PC-3 (cell line): ENCODE measurements at regions of chr10 and their contacts with region 1.

Region 1: GRCh38 chr10:60466267-60467201 is 76.9 kb upstream of the ANK3 start:
- DNase-seq: peak; percentile 99
- ATAC-seq: peak; percentile 80
- H3K4me3 ChIP-seq: peak overlapping the region; percentile 58
- H3K27ac ChIP-seq: peak overlapping the region; percentile 93
- H3K4me1 ChIP-seq: peaks cover 51% of the 10 kb centered on the region
- H3K27me3 ChIP-seq: no peaks in the 10 kb centered on the region
- CTCF ChIP-seq: no peak; the same call in 1 of the 2 replicates

Region 2: GRCh38 chr10:60323162-60323561 is 143.4 kb before region 1 on chr10:
- CTCF ChIA-PET with region 1: no interaction called
- POLR2A ChIA-PET with region 1: no interaction called
- intact Hi-C with region 1: no loop called
- DNase-seq: no peak
- ATAC-seq: no peak
- H3K4me3 ChIP-seq: no peak overlapping the region
- H3K27ac ChIP-seq: no peak overlapping the region
- H3K4me1 ChIP-seq: no peaks in the 10 kb centered on the region
- H3K27me3 ChIP-seq: no peaks in the 10 kb centered on the region
- CTCF ChIP-seq: no peak

Region 3: GRCh38 chr10:60388709-60389301 is 77.7 kb before region 1 on chr10:
- CTCF ChIA-PET with region 1: no interaction called
- POLR2A ChIA-PET with region 1: no interaction called
- intact Hi-C with region 1: no loop called
- DNase-seq: peak; percentile 21
- ATAC-seq: no peak
- H3K4me3 ChIP-seq: no peak overlapping the region
- H3K27ac ChIP-seq: 0 out of 2 replicates have a peak overlapping the region, but pooled peaks have one; percentile 1
- H3K4me1 ChIP-seq: peaks cover 48% of the 10 kb centered on the region
- H3K27me3 ChIP-seq: no peaks in the 10 kb centered on the region
- CTCF ChIP-seq: no peak

Region 4: GRCh38 chr10:60480865-60481563 is 14.5 kb after region 1 on chr10:
- CTCF ChIA-PET with region 1: no interaction called
- POLR2A ChIA-PET with region 1: no interaction called
- intact Hi-C with region 1: loop called (anchors 1 kb)
- DNase-seq: peak; percentile 100
- ATAC-seq: peak; percentile 82
- H3K4me3 ChIP-seq: peak overlapping the region; percentile 23
- H3K27ac ChIP-seq: peak overlapping the region; percentile 80
- H3K4me1 ChIP-seq: peaks cover 40% of the 10 kb centered on the region
- H3K27me3 ChIP-seq: no peaks in the 10 kb centered on the region
- CTCF ChIP-seq: no peak

Region 5: DNA sequence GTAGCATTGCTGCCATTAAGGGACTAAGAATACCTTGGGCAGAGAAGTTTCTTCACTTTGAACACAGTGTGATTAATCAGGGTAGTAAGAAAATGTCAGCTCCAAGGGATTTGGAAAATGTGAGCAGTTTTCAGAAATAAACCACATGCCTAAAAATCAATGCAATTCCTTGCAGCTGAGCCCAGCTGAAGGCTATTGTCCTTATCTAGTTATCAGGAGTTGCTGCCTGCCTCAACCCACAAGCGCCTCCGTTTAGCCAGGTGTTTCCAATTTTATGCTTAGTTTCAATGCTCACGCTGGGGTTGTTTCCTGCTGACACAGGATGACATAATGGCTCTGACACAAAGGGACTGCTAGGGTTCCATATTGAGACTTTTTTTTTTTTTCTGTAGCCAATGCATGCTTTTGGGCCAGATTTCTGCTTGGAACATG is 55.5 kb after region 1 on chr10:
- CTCF ChIA-PET with region 1: no interaction called
- POLR2A ChIA-PET with region 1: no interaction called
- intact Hi-C with region 1: no loop called
- DNase-seq: peak; percentile 53
- ATAC-seq: no peak
- H3K4me3 ChIP-seq: no peak overlapping the region
- H3K27ac ChIP-seq: no peak overlapping the region
- H3K4me1 ChIP-seq: peaks cover 28% of the 10 kb centered on the region
- H3K27me3 ChIP-seq: no peaks in the 10 kb centered on the region
- CTCF ChIP-seq: no peak

Region 6: GRCh38 chr10:60536529-60537114 is 70.1 kb after region 1 on chr10:
- CTCF ChIA-PET with region 1: interaction called, 3 read pairs
- POLR2A ChIA-PET with region 1: interaction called, 3 read pairs
- intact Hi-C with region 1: loop called (anchors 1 kb)
- DNase-seq: peak; percentile 98
- ATAC-seq: peak; percentile 86
- H3K4me3 ChIP-seq: peak overlapping the region; percentile 8
- H3K27ac ChIP-seq: peak overlapping the region; percentile 59
- H3K4me1 ChIP-seq: peaks cover 54% of the 10 kb centered on the region
- H3K27me3 ChIP-seq: no peaks in the 10 kb centered on the region
- CTCF ChIP-seq: no peak; the same call in 1 of the 2 replicates

Region 7: GRCh38 chr10:60781661-60782060 is 315.1 kb after region 1 on chr10:
- CTCF ChIA-PET with region 1: no interaction called
- POLR2A ChIA-PET with region 1: no interaction called
- intact Hi-C with region 1: loop called (anchors 5 kb)
- DNase-seq: no peak
- ATAC-seq: no peak
- H3K4me3 ChIP-seq: peak overlapping the region; percentile 73
- H3K27ac ChIP-seq: no peak overlapping the region
- H3K4me1 ChIP-seq: peaks cover 38% of the 10 kb centered on the region
- H3K27me3 ChIP-seq: no peaks in the 10 kb centered on the region
- CTCF ChIP-seq: no peak